Activated CD8-positive, alpha-beta T cell treated with anti-CD3 and anti-CD28 coated beads for 36 hours (primary cell): ENCODE measurements at regions of chr6 and their contacts with region 1.

Region 1: GRCh38 chr6:109073344-109074132 is 21.1 kb downstream of the SESN1 start:
- DNase-seq: peak; percentile 54
- ATAC-seq: peak; percentile 72
- H3K4me3 Mint-ChIP-seq: no peak overlapping the region
- H3K27ac Mint-ChIP-seq: no peak overlapping the region
- H3K4me1 Mint-ChIP-seq: peaks cover 25% of the 10 kb centered on the region
- H3K27me3 Mint-ChIP-seq: no peaks in the 10 kb centered on the region
- CTCF ChIP-seq: peak; percentile 82

Region 2: GRCh38 chr6:108835218-108835850 is 238.2 kb before region 1 on chr6:
- CTCF ChIA-PET with region 1: interaction called, 17 read pairs
- POLR2A ChIA-PET with region 1: no interaction called
- intact Hi-C with region 1: loop called (anchors 10 kb)
- DNase-seq: peak; percentile 95
- ATAC-seq: peak; percentile 96
- H3K4me3 Mint-ChIP-seq: no peak overlapping the region
- H3K27ac Mint-ChIP-seq: no peak overlapping the region
- H3K4me1 Mint-ChIP-seq: peaks cover 19% of the 10 kb centered on the region
- H3K27me3 Mint-ChIP-seq: peaks cover 2% of the 10 kb centered on the region
- CTCF ChIP-seq: peak; percentile 91

Region 3: DNA sequence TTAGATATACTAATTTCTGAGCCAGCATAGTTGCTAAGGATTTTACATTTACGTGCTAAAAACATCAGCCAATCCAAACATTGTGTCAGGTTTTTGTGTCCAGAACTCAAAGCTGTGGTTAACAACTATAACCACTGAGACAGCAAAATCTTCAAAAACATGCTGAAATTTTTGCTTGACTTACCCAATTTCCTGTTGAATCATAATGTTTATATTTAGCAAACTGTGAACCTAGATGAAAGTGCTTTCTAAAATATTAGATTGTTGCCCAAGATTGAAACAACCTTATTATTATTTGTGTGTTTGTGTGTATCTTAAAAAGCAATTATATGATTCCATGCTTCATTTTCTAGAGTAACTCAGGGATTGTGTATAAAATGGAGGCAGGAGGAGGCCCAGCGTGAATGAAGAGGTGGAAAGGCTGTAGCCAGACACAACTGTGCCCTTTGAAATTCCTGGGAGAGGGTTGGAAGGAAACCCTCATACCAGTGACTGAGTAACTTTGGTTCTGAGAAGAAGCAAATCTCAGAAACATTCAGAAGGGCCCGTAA is 177.4 kb before region 1 on chr6:
- CTCF ChIA-PET with region 1: interaction called, 24 read pairs
- POLR2A ChIA-PET with region 1: no interaction called
- intact Hi-C with region 1: no loop called
- DNase-seq: no peak
- ATAC-seq: peak; percentile 63
- H3K4me3 Mint-ChIP-seq: no peak overlapping the region
- H3K27ac Mint-ChIP-seq: peak overlapping the region; percentile 84
- H3K4me1 Mint-ChIP-seq: peaks cover 25% of the 10 kb centered on the region
- H3K27me3 Mint-ChIP-seq: no peaks in the 10 kb centered on the region
- CTCF ChIP-seq: no peak

Region 4: GRCh38 chr6:108921547-108922361 is 151.8 kb before region 1 on chr6:
- CTCF ChIA-PET with region 1: interaction called, 32 read pairs
- POLR2A ChIA-PET with region 1: no interaction called
- intact Hi-C with region 1: loop called (anchors 5 kb)
- DNase-seq: peak; percentile 73
- ATAC-seq: peak; percentile 80
- H3K4me3 Mint-ChIP-seq: peak overlapping the region; percentile 1
- H3K27ac Mint-ChIP-seq: peak overlapping the region; percentile 47
- H3K4me1 Mint-ChIP-seq: peaks cover 34% of the 10 kb centered on the region
- H3K27me3 Mint-ChIP-seq: no peaks in the 10 kb centered on the region
- CTCF ChIP-seq: no peak

Region 5: DNA sequence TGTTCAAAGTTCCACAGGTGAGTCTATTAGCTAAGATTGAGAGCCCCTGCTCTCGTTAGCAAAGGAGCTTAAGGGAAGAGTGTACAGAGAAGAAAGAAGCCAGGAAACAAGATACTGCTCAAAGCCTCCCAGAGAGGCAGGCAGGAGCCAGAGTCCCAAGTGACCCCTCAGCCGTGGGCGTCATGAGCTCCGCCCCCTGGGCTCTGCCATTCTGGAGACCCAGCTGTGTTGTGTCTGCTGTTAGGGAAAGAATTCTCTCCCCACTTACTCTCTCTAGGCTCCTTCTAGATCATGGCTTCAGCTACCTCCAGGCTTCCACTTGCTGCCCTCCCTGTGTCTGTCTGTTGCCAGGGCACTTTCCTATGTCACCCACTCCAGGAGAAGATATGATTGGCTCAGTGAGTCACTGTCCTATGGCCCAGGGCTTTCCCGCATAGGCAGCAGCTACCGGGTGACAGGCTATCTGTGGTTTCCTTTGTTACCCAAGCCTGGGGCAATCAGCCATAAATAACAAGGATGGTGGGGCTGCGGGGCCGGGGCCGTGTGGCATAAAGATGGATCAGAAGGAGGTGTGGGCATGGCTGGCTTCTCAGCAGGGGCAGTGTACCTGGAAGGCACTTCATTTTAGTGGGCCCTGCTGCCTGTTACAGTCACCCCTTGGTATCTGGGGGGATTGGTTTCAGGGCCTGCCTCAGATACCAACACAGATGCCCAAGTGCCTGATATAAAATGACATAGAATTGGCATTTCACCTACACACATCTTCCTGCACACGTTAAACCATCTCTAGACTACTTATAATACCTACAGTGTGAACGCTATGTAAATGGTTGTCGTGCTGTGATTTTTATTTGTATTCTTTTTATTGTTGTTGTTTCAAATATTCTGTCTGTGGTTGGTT is 106.4 kb before region 1 on chr6:
- CTCF ChIA-PET with region 1: no interaction called
- POLR2A ChIA-PET with region 1: no interaction called
- intact Hi-C with region 1: no loop called
- DNase-seq: peak; percentile 49
- ATAC-seq: peak; percentile 97
- H3K4me3 Mint-ChIP-seq: no peak overlapping the region
- H3K27ac Mint-ChIP-seq: no peak overlapping the region
- H3K4me1 Mint-ChIP-seq: peaks cover 15% of the 10 kb centered on the region
- H3K27me3 Mint-ChIP-seq: no peaks in the 10 kb centered on the region
- CTCF ChIP-seq: no peak

Region 6: DNA sequence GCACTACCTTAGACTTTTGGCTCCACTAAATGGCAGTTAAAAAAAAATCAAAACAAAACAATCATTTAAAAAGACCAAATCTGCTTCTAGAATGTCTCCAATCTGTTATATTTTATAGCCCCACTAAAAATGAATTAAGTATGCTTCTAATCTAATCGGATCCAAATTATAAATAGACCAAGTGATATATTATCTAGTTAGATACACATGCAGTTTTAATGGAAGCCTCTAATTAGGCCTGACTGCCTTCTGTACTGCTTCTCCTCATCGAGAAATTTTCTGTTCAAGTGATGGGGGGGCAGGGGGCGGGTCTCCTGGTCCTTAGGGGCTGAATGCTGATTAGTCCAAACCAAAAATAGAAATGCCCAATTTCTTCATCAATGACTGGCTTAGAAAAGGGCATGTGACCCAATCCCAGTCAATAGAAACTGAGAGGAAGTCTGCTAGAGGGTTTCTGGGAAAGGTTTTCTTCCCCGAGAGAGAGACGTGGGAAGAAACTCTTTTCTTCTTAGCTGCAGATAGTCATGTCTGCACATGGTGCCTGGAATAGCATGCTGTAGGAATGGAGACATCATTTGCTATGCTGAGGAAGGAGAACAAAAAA is 14.2 kb after region 1 on chr6:
- CTCF ChIA-PET with region 1: interaction called, 28 read pairs
- POLR2A ChIA-PET with region 1: interaction called, 3 read pairs
- intact Hi-C with region 1: no loop called
- DNase-seq: no peak
- ATAC-seq: no peak
- H3K4me3 Mint-ChIP-seq: no peak overlapping the region
- H3K27ac Mint-ChIP-seq: no peak overlapping the region
- H3K4me1 Mint-ChIP-seq: peaks cover 33% of the 10 kb centered on the region
- H3K27me3 Mint-ChIP-seq: no peaks in the 10 kb centered on the region
- CTCF ChIP-seq: no peak